ENCODE measurements at regions of chrX and their contacts with region 1.

Region 1: GRCh38 chrX:139967300-139967699 is 2.0 kb upstream of the CXorf66 start:
- DNase-seq: peak; percentile 14
- ATAC-seq: peak; percentile 50; the same call in 1 of the 2 replicates
- H3K4me3 Mint-ChIP-seq: no peak overlapping the region
- H3K27ac Mint-ChIP-seq: no peak overlapping the region
- H3K4me1 Mint-ChIP-seq: peaks cover 8% of the 10 kb centered on the region
- H3K27me3 Mint-ChIP-seq: peaks cover 13% of the 10 kb centered on the region
- CTCF ChIP-seq: no peak

Region 2: GRCh38 chrX:139936259-139936658 is 31.0 kb before region 1 on chrX:
- CTCF ChIA-PET with region 1: interaction called, 12 read pairs
- POLR2A ChIA-PET with region 1: no interaction called
- DNase-seq: no peak
- ATAC-seq: peak; percentile 6
- H3K4me3 Mint-ChIP-seq: no peak overlapping the region
- H3K27ac Mint-ChIP-seq: no peak overlapping the region
- H3K4me1 Mint-ChIP-seq: peaks cover 20% of the 10 kb centered on the region
- H3K27me3 Mint-ChIP-seq: no peaks in the 10 kb centered on the region; the same call in 1 of the 2 replicates
- CTCF ChIP-seq: no peak